Mammary epithelial cell (primary cell): ENCODE measurements at regions of chr20 and their contacts with region 1.

Region 1: DNA sequence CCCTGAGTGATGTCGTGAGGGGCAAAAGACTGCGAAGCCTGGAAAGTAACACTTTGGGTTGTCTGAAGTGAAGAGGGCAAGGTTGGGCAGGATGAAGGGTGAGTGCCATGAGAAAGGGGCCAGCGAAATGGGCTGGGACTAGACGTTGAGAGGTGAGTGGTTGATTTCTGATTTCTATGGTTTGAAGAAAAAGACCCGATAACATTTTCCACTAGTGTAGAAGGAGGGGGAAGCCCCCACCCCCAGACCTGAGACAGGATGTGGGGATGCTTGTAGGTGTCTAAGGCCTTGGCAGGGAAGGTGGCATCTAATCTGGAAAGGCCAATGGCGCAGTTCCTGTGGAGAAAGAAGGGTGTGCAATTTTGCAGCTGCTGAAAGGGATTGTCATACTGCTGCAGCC is 25.3 kb upstream of the KIF3B start:
- DNase-seq: no peak
- H3K4me3 ChIP-seq: no peak overlapping the region
- H3K27ac ChIP-seq: no peak overlapping the region
- H3K4me1 ChIP-seq: no peaks in the 10 kb centered on the region
- H3K27me3 ChIP-seq: no peaks in the 10 kb centered on the region
- CTCF ChIP-seq: no peak

Region 2: DNA sequence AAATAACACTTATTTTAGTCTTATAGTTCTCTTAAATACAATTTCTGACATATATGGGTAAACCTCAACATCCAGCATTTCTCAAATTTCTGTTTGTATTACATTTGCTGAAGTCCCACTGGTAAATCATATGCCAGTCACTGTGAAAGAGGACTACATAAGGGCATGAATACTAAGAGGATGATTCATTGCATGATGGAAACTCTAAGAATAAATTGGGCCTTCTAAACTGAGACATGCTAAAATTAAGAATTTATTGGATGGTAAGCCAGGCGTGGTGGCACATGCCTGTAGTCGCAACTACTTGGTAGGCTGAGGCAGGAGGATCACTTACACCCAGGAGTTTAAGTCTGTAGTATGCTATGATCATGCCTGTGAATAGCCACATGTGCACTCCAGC is 799.6 kb before region 1 on chr20:
- CTCF ChIA-PET with region 1: no interaction called
- dilution Hi-C with region 1: no loop called
- in situ Hi-C with region 1: no loop called
- intact Hi-C with region 1: no loop called
- DNase-seq: no peak
- H3K4me3 ChIP-seq: no peak overlapping the region
- H3K27ac ChIP-seq: no peak overlapping the region
- H3K4me1 ChIP-seq: no peaks in the 10 kb centered on the region
- H3K27me3 ChIP-seq: no peaks in the 10 kb centered on the region
- CTCF ChIP-seq: no peak

Region 3: DNA sequence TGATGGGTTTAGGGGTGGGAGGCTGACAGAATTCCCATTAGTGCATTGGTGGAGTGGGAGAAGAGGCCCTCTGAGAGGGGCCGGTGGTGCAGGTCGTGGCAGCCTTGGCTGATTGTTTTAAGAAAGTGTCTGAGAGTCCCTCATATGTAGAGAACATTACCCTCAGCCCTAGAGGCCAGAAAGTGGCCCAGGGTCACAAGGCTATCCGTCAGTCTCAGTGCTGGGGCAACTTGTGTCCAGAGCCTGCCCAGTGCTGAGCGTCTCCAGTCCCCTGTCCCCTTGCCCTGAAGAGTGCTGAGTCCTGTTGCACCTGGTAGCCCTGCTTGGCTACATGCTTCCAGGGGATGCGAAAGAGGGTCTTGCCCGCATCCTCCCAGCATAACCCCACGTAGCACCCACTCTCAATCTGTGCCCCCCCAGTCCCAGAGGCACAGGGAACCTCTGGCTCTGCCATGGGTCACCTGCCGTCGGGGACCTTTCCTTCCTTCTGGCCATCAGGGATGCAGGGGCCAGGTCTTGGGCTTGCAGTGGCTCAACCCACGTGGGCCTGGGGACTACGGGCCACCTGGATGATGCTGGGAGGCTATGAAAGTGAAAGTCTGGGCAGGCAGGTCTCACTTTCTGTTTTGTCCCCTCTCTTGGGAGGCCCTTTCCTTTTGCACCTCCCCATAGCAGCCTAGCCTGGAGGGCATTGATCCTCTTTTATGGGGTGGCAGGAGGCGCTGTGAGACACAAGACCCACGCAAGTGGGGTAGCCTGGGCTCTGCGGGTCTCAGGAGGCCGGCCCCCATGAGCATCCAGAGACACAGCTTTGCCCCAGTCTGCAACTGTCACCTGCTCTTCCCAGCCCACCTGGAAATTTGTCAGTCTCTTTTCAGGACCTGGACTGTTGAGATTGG is 394.1 kb before region 1 on chr20:
- CTCF ChIA-PET with region 1: no interaction called
- dilution Hi-C with region 1: no loop called
- in situ Hi-C with region 1: no loop called
- intact Hi-C with region 1: no loop called
- DNase-seq: no peak
- H3K4me3 ChIP-seq: no peak overlapping the region
- H3K27ac ChIP-seq: no peak overlapping the region
- H3K4me1 ChIP-seq: peaks cover 10% of the 10 kb centered on the region
- H3K27me3 ChIP-seq: peaks cover 6% of the 10 kb centered on the region
- CTCF ChIP-seq: no peak

Region 4: DNA sequence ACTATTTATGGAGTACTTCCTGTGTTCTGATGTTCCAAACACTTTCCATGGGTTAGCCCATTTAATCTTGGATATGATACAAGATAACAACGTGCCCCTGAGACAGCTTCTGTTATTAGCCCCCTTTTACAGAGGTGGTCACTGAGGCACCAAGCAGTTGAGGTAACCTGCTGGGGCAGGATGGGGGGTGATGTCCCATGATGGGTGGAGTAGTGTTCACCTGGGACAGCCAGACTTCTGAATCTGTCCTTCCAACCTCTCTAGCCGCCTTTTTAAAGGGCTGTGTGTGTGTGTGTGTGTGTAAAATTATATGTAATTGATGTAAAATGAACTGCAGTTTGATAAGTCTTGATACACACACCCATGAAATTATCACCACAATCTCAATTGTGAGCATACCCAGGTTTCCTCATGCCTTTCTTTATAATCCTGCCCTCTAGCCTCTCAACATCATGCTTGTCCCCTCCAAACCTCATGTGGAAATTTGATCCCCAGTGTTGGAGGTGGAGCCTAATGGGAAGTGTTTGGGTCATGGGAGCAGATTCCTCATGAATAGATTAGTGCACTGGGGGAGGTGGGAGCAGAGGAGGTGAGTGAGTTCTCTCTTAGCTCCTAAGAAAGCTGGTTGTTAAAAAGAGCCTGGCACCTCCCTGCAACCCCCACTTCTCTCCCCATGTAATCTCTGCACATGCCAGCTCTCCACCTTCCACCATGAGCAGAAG is 83.8 kb before region 1 on chr20:
- CTCF ChIA-PET with region 1: no interaction called
- dilution Hi-C with region 1: no loop called
- in situ Hi-C with region 1: no loop called
- intact Hi-C with region 1: no loop called
- DNase-seq: no peak
- H3K4me3 ChIP-seq: no peak overlapping the region
- H3K27ac ChIP-seq: no peak overlapping the region
- H3K4me1 ChIP-seq: no peaks in the 10 kb centered on the region
- H3K27me3 ChIP-seq: no peaks in the 10 kb centered on the region
- CTCF ChIP-seq: no peak

Region 5: GRCh38 chr20:32216179-32217142 is 35.7 kb before region 1 on chr20:
- CTCF ChIA-PET with region 1: no interaction called
- dilution Hi-C with region 1: loop called (anchors 5 kb)
- in situ Hi-C with region 1: no loop called
- intact Hi-C with region 1: no loop called
- DNase-seq: no peak
- H3K4me3 ChIP-seq: no peak overlapping the region
- H3K27ac ChIP-seq: no peak overlapping the region
- H3K4me1 ChIP-seq: no peaks in the 10 kb centered on the region
- H3K27me3 ChIP-seq: no peaks in the 10 kb centered on the region
- CTCF ChIP-seq: no peak

Region 6: DNA sequence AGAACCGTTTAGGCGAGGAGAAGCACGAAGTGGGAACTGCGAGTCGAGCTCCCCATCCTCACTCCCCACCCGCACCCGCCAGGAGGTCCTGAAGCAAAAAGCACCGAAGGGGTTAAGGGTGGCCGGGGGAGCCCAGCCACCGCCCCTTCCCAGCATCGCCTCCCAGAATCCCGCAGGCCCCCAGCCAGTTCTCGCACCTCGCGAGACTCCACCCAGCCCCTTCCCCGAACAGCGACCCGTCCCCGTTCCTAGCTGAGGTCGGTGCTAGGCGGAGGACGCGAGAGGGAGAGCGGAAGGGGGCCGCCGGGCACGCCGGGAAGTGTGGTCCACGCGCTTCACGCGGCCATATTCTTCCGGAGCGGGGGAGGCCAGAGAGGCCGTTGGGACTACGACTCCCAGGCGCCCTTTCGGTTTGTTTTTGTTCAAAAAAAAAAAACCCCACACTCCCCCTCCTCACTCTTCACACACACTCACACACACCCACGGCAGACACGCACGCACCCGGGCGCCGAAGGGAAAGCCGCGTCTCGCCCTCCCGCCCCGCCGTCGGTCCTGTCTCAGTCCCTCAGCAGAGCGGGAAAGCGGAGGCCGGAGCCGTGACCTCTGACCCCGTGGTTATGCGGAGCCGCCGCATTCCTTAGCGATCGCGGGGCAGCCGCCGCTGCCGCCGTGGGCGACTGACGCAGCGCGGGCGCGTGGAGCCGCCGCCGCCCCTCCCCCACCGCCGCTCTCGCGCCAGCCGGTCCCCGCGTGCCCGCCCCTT is 105.9 kb after region 1 on chr20 and contains the start of gene ASXL1:
- CTCF ChIA-PET with region 1: no interaction called
- dilution Hi-C with region 1: no loop called
- in situ Hi-C with region 1: no loop called
- intact Hi-C with region 1: no loop called
- DNase-seq: peak; percentile 91
- H3K4me3 ChIP-seq: peak within 1 kb of the TSS; percentile 61 to 70 (median 64)
- H3K27ac ChIP-seq: peak within 1 kb of the TSS; percentile 76
- H3K4me1 ChIP-seq: peaks cover 38% of the 10 kb centered on the region
- H3K27me3 ChIP-seq: no peaks in the 10 kb centered on the region
- CTCF ChIP-seq: no peak
- total RNA-seq, gene ASXL1: 37.2 to 60.1 TPM

Region 7: GRCh38 chr20:32411955-32412706 is 159.9 kb after region 1 on chr20:
- CTCF ChIA-PET with region 1: interaction called, 16 read pairs
- dilution Hi-C with region 1: no loop called
- in situ Hi-C with region 1: no loop called
- intact Hi-C with region 1: no loop called
- DNase-seq: no peak
- H3K4me3 ChIP-seq: no peak overlapping the region
- H3K27ac ChIP-seq: no peak overlapping the region
- H3K4me1 ChIP-seq: no peaks in the 10 kb centered on the region
- H3K27me3 ChIP-seq: no peaks in the 10 kb centered on the region
- CTCF ChIP-seq: no peak